Aorta (tissue), 5 donors: ENCODE measurements at regions of chr3 and their contacts with region 1.

Region 1: GRCh38 chr3:101849051-101849720 is at the start of gene NFKBIZ:
- DNase-seq: peak; percentile 98 to 99
- ATAC-seq: peak; percentile 96
- H3K4me3 ChIP-seq: peak within 1 kb of the TSS; percentile 94 to 100
- H3K27ac ChIP-seq: peak within 1 kb of the TSS; percentile 99 to 100
- H3K4me1 ChIP-seq: peaks cover 4 to 5% of the 10 kb centered on the region in 2 donors
- H3K27me3 ChIP-seq: peaks cover 0 to 2% of the 10 kb centered on the region in 2 donors
- total RNA-seq, gene NFKBIZ: 109 to 198 TPM

Region 2: DNA sequence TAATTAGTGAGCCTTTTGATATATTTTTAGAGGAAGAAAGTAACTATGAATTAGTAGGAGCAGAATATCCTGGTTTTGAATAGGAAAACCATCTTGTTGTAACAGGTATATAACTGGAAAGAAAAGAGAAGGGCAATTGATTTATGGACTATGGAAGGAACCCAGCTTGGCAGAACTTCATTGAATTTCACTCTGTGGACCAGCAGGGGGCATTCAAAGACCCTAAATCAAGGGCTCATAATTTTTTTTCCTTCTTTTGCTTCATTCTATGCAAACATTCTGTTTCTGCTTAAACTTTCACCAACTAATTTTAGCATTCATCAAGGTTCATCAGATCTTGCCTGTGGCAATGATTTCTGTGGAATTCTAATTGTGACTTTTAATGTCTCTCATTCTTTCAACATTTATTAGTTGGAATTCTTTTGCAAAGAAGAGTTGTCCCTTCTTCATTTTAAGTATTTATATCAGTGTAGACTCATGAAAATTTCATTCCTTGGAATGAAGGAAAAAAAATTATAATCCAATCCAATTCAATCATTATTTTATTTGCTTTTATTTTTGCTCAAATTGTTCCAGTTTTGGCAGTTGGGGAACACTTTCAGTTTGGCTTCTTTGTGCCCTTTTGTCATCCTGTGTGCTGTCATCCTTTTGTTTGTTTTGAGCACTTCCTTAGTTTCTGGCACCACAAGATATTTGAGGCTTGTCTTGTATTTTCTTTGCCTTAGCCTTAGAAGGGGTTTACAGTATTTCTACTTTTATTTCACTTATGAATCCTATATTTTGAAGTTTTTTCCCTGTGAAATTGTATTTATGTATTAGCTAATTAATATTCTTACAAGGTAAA is 39.8 kb before region 1 on chr3:
- intact Hi-C with region 1: loop called in 1 of 2 experiments (anchors 5 kb)
- DNase-seq: no peak
- ATAC-seq: peak; percentile 60
- H3K4me3 ChIP-seq: no peak overlapping the region
- H3K27ac ChIP-seq: no peak overlapping the region
- H3K4me1 ChIP-seq: no peaks in the 10 kb centered on the region
- H3K27me3 ChIP-seq: no peaks in the 10 kb centered on the region

Region 3: GRCh38 chr3:101827211-101828174 is 21.7 kb before region 1 on chr3:
- intact Hi-C with region 1: loop called (anchors 1 to 2 kb)
- DNase-seq: peak; percentile 88 to 90
- ATAC-seq: peak; percentile 92
- H3K4me3 ChIP-seq: peak overlapping the region; percentile 49 to 57
- H3K27ac ChIP-seq: peak overlapping the region; percentile 3 to 68
- H3K4me1 ChIP-seq: peaks cover 0 to 6% of the 10 kb centered on the region in 2 donors
- H3K27me3 ChIP-seq: no peaks in the 10 kb centered on the region